Activated naive CD4-positive, alpha-beta T cell treated with anti-CD3 and anti-CD28 coated beads for 36 hours (primary cell): ENCODE measurements at regions of chr10 and their contacts with region 1.

Region 1: GRCh38 chr10:101353692-101354327 is at the start of gene BTRC:
- DNase-seq: peak; percentile 98
- H3K4me3 Mint-ChIP-seq: peak within 1 kb of the TSS; percentile 92
- H3K27ac Mint-ChIP-seq: peak within 1 kb of the TSS; percentile 95
- H3K4me1 Mint-ChIP-seq: peaks cover 30% of the 10 kb centered on the region
- H3K27me3 Mint-ChIP-seq: peaks cover 2% of the 10 kb centered on the region
- total RNA-seq, gene BTRC: 10.9 to 12.7 TPM

Region 2: DNA sequence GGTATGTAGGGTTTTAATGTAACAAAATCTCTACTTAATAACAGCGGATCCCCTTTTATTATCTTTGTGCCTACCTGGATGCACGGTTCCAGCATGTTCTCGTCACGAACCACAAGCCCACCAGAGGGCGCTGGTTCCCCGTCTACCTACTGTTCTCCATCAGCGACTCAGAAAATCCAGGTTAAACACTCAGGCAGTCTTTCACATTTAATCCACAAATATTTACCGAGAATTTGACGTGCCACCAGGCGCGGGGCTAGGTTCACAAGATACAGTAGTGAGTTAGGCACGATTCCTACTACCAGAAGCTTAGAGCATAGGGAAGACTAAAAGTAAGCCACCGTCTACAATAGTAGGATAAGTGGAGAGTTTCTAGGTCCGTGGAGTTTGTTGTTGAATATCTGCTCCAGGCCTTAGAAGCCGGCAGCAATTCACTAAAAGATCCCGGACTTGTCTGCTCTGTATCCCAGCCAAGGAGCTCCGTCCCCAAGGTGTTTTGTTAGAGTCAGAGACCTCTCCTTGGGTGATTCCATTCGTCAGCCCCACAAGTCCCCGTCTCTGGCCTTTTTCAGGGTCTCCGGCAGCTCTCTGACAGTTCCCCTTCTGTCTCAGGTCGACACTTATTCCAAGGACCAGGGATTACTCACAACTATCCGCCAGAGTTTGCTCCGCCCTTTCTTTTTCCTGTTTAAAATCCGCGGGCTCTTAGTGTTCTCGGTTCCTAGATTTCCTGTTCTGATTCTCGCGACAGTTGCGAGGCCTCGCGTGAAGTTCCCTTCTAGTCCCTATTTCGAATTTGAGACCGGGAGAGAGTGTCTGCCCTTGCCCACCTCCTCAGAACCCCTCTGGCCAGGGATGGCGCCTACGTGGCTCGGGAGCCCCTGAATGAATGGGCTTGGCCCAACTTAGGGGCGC is 293.5 kb before region 1 on chr10:
- CTCF ChIA-PET with region 1: no interaction called
- intact Hi-C with region 1: loop called (anchors 1 kb)
- DNase-seq: peak; percentile 96
- H3K4me3 Mint-ChIP-seq: peak overlapping the region; percentile 87
- H3K27ac Mint-ChIP-seq: peak overlapping the region; percentile 93
- H3K4me1 Mint-ChIP-seq: peaks cover 29% of the 10 kb centered on the region
- H3K27me3 Mint-ChIP-seq: peaks cover 24% of the 10 kb centered on the region

Region 3: DNA sequence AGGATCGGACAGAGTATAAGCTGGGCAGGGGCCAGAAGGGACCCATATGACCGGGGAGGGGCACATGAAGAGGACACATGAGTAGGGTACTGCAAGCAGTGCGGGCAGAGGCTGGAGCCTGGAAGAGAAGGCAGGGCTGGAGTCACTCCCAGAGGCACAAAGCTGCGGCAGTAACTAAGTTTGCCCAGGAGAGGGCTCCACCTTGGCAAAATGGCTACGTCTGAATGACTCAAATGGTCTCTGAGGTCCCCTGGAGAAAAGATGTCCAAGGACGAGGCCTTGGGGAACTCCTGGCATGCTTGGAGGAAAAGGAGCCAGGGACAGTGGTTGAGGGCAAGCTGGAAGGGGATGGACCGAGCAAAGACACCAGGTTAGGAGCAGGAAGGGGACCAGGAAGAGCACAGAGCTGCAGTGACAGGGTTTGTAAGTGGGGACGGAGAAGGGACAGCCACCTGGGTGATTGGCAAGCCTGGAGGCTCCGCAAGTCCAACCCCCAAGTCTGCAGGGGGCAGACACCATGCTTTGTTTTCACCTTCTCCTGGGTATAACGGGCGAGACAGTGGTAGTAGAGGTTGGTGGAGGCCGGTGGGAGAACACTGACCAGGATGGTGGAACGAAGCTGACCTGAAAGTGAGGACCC is 81.5 kb before region 1 on chr10:
- CTCF ChIA-PET with region 1: no interaction called
- intact Hi-C with region 1: no loop called
- DNase-seq: peak; percentile 73
- H3K4me3 Mint-ChIP-seq: no peak overlapping the region
- H3K27ac Mint-ChIP-seq: no peak overlapping the region
- H3K4me1 Mint-ChIP-seq: peaks cover 2% of the 10 kb centered on the region
- H3K27me3 Mint-ChIP-seq: peaks cover 20% of the 10 kb centered on the region

Region 4: DNA sequence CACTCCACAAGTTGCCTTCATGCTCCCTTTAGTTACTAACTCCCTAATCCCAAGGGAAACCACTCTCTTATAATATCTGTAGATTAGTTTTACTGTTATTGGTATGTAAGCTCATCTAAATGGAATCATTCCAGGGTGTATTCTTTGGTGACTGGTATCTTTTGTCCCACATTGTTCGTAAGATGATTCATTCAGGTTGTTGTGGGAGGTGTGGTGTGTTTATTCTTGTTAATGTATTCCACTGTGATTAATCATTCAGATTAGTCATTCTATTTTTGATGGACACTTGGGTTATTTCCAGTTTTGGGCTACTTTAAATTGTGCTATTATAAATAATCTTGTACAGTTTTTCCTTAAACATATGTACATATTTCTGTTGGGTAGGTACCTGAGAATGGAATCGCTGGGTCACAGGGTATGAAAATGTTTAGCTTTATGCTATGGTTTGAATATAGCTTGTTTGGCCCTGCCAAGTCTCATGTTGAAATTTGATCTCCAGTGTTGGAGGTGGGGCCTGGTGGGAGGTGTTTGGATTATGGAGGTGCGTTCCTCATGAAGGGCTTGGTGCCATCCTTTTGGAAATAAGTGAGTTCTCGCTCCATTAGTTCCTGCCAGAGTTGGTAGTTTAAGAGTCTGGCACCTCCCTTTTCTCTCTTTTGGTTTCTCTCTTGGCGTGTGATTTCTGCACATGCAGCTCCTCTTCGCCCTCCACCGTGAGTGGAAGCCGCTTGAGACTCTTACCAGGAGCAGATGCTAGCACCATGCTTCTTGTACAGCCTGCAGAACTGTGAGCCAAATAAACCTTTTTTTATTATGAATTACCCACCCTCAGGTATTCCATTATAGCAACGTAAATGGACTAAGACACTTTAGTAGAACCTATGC is 14.0 kb after region 1 on chr10:
- CTCF ChIA-PET with region 1: no interaction called
- intact Hi-C with region 1: no loop called
- DNase-seq: no peak
- H3K4me3 Mint-ChIP-seq: no peak overlapping the region
- H3K27ac Mint-ChIP-seq: no peak overlapping the region
- H3K4me1 Mint-ChIP-seq: peaks cover 15% of the 10 kb centered on the region
- H3K27me3 Mint-ChIP-seq: no peaks in the 10 kb centered on the region

Region 5: DNA sequence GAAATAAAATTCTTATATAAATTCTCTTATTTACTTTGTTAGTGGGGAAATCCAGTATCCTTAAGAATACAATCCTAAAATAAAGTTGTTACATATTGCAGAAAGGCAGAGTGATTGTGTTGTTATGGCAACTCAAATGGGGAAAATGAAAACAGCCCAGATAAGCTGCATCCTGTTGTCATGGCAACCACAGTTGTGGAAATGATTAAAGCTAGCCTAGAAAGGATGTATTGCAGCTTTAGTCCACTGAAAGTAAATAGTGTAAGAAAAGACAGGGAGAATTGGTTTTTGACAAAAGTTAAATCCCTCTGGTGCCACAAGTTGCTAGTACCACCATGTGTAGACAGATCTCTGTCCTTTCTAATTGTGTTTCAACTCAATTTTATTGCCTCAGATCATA is 43.3 kb after region 1 on chr10:
- CTCF ChIA-PET with region 1: no interaction called
- intact Hi-C with region 1: loop called (anchors 5 kb)
- DNase-seq: peak; percentile 27
- H3K4me3 Mint-ChIP-seq: no peak overlapping the region
- H3K27ac Mint-ChIP-seq: no peak overlapping the region
- H3K4me1 Mint-ChIP-seq: peaks cover 9% of the 10 kb centered on the region
- H3K27me3 Mint-ChIP-seq: no peaks in the 10 kb centered on the region

Region 6: DNA sequence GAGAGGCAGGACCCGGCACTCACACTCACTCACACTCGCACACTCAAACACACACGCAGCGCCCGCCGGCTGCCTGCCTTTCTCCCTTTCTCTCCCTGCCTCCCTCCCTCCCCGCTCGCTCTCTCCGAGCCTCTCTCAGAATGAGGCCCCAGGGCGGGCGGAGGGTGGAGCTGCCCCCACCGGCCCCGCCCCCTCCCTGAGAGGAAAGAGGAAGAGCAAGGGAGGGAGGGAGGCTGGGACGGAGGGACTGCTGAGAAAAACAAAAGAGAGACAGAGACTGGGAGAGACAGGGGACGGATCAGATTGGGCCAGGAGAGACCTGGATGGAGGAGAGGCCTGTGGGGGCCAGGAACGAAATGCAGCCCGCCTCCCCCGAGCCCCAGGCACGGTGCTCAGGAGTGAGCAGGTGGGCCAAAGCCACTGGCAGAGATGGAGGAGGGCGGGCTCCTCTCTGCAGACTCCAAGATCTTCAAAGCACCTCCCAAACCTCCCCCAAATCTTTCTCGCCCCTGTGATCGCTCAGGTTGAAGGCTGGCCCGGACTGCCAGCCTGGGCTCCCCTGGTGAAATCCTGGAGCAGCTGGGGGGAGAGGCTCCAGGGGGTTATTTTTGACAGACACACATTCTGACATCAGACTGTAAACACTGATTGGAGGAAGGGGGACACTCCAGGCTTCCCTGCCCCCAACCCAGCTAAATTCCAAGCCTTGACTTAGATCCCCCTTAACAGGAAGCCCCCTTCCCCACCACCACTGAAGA is 761.2 kb after region 1 on chr10:
- CTCF ChIA-PET with region 1: no interaction called
- intact Hi-C with region 1: loop called (anchors 2 kb)
- DNase-seq: peak; percentile 92
- H3K4me3 Mint-ChIP-seq: peak overlapping the region; percentile 93
- H3K27ac Mint-ChIP-seq: peak overlapping the region; percentile 98
- H3K4me1 Mint-ChIP-seq: peaks cover 53% of the 10 kb centered on the region
- H3K27me3 Mint-ChIP-seq: no peaks in the 10 kb centered on the region

Region 7: DNA sequence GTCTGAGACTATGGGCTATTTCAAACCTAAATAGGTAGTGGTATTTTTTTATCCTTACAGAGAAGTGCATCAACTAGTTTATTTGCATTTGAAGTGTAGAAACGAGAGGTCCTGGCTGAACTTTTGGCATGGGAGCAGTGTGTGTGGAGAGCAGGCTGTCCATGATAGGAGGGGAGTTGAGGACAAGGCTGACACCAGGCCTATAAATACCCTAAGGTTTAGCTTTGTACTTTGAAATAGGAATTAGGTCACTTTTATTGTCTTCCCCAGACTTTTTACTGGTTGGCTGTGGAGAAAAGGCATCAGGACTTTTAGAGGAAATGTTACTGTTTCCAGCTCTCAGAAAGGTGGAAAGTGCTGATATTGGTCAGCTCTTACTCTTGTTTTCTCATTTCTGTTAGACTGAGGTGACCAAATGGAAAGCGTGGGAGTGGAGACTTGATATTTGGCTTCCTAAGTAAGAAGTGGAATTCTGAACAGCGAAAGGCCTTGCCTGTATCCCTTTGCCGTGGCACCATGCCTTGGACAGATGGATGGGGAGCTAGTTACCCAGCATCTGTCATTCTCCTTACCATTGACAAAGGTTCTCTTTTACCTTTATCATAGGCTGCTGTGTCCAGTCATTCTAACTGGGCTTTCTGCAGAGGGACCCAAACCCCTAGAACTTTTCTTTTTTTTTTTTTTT is 937.6 kb after region 1 on chr10:
- CTCF ChIA-PET with region 1: no interaction called
- intact Hi-C with region 1: no loop called
- DNase-seq: no peak
- H3K4me3 Mint-ChIP-seq: no peak overlapping the region
- H3K27ac Mint-ChIP-seq: no peak overlapping the region
- H3K4me1 Mint-ChIP-seq: peaks cover 17% of the 10 kb centered on the region
- H3K27me3 Mint-ChIP-seq: no peaks in the 10 kb centered on the region